ENCODE measurements at regions of chr2 and their contacts with region 1.

Region 1: GRCh38 chr2:117785740-117786139 is 28.8 kb upstream of the DDX18 start:
- DNase-seq: peak; percentile 75
- H3K4me3 Mint-ChIP-seq: no peak overlapping the region
- H3K27ac Mint-ChIP-seq: no peak overlapping the region
- H3K4me1 Mint-ChIP-seq: no peaks in the 10 kb centered on the region
- H3K27me3 Mint-ChIP-seq: no peaks in the 10 kb centered on the region

Region 2: DNA sequence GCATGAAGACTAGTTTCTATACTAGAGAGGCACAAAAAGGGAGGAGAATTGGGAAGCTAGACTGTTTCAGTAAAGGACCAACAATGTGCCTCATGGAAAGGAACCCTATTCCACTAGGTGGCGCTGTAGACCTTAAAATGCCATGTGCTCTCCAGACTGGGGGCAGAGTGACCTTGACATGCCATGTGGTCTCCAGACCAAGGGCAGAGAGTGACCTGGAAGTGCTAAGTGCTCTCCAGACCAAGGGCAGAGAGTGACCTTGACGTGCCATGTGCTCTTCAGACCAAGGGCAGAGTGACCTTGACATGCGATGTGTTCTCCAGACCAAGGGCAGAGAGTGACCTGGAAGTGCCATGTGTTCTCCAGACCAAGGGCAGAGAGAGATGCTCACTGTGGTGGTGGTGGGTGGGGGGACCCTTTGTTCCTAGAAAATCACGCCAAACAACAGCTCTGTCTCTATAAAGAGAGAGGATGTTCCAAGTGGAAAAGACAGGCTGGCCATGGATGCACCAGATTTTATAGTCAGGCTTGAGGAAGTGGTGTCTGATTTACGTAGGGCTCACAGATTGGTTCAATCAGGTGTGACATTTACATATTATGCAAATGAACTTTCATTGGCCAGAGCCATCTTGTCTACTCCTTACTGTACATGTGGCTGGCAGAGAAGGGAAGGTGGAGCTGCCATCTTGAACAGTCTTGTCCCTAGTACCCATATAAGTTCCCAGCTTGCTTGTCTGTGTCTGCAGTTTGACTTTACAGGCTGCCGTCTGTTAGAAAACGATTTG is 315.2 kb before region 1 on chr2:
- intact Hi-C with region 1: loop called (anchors 10 kb)
- DNase-seq: peak; percentile 69
- H3K4me3 Mint-ChIP-seq: no peak overlapping the region
- H3K27ac Mint-ChIP-seq: no peak overlapping the region
- H3K4me1 Mint-ChIP-seq: no peaks in the 10 kb centered on the region
- H3K27me3 Mint-ChIP-seq: no peaks in the 10 kb centered on the region